Activated T-helper 2 cell treated with anti-CD3 and anti-CD28 coated beads, Interferon-gamma antibody, Interleukin-2, Interleukin-4, amounts not matched to agents 10 μg/mL and 5 μg/mL and 100 μg/mL, durations not matched to agents 14 hours and 24 hours and 36 hours (primary cell): ENCODE measurements at regions of chr2 and their contacts with region 1.

Region 1: DNA sequence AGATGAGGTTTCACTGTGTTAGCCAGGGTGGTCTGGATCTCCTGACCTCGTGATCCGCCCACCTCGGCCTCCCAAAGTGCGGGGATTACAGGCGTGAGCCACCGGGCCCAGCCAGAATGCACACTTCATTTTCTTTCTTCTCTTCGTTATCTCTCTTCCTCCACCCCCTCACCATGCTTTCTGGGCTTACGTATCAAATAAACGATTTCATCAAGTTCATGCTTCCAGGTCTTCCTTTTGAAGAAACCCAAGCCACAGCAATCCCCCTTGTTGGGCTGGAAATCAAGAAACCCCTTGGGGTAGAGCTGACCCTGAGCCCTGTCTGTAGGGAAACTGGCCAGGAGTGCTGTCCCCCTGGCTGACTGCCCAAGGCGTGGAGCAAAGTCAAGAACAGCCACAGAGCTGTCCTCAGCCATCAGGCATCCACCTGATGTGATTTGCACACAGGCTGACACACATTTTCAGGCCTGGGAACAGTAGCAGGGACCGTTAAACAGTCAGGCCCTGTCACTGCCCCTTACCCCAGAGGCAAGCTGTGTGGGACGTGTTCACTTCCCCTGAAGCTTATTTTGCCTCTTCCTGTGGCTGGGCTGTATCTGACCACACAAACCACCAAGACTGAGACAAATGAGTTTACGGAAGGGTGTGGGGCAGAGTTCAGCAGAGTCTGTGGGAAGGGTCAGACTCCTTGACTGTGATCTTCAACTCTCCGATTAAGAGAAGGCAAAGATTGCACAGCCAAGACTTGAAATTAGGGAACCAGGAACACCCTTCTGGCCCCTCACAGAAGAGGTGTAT is 15.1 kb upstream of the NMUR1 start:
- DNase-seq: peak; percentile 78
- H3K4me3 Mint-ChIP-seq: peak overlapping the region; percentile 78
- H3K27ac Mint-ChIP-seq: peak overlapping the region; percentile 99
- H3K4me1 Mint-ChIP-seq: peaks cover 40% of the 10 kb centered on the region
- H3K27me3 Mint-ChIP-seq: peaks cover 8% of the 10 kb centered on the region

Region 2: DNA sequence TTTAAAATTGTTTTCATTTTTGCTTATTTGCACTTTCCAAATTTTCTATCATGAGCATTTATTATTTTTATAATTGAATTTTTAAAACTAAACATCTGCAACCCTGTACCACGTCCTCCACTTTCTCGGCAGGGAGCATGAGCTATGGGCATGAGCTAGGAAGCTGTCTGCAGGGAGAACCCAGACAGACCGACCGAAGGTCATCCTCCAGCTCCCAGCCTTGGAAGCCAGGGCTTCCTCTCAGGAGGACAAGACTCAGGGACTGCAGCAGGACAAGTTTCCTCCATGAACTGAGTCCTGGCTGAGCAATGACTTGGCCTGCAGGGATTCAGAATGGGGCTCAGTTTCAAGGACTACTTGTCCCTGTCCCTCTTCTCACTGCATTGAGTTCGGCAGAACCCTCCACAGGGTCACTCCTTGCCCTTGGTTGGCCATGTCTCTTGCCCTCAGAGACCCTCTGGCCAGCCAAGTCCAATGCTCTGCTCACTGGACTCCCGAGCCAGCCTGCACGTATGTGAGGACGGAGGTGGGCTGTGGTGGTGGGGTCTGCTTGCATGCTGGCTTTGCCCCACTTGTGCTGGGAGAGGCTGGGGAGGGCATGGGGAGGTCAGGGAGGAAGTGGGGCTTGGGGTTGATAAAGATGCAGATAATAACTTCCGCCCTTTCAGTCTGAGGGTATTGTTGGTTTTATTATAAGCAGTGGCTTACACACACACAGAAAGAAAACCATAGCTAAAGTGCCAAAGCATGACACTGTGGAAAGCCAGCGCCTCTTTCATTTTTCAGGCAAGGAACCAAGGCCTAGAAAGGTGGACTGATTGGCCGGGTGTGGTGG is 21.6 kb before region 1 on chr2:
- intact Hi-C with region 1: loop called (anchors 1 kb)
- DNase-seq: no peak
- H3K4me3 Mint-ChIP-seq: peak overlapping the region; percentile 18
- H3K27ac Mint-ChIP-seq: peak overlapping the region; percentile 28
- H3K4me1 Mint-ChIP-seq: peaks cover 54% of the 10 kb centered on the region
- H3K27me3 Mint-ChIP-seq: peaks cover 6% of the 10 kb centered on the region

Region 3: DNA sequence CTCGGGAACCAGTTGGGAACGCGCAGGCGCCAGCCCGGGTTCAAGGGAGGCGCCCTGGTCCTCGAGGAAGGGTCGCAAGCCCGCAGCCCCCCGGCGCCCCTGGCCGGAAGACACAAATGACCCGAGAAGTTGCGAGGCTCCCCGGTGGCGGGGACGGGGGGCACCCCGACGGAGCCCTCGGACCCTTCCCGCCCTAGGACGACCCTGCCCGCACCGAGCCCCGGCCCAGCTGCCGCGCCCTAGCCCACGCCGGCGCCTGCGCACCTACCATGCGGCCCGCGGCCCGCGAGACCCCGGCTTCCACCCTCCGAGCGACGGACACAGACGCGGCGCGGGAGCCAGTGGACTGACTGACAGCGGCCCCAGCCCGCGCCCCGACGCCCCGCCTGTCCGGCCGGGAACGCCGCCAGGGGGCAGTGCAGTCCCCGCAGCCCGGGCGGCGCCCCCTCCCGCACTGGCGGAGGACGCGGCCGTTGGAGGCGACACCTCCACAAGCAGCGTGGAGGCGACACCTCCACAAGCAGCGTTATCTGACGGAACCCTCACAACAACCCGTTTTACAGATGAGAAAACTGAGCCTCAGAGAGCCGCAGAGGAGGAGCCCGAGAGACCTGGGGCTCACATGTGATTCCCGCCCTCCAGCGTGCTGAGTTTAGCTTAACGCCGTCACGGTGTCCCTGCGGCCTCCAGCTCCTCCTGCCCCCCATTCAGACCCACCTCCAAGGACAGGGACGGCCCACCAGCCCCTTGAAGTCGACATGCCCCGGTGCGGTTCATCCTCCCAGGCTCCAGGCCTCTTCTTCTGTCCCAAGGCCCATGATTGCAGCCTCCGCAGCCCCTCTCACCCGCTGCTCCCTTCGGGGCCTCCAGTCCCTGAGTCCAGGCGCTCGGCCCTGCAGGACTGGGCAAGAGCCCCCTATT is 15.0 kb before region 1 on chr2 and contains the start of gene NMUR1:
- intact Hi-C with region 1: loop called (anchors 2 kb)
- DNase-seq: peak; percentile 71
- H3K4me3 Mint-ChIP-seq: peak within 1 kb of the TSS; percentile 66
- H3K27ac Mint-ChIP-seq: no peak within 1 kb of the TSS
- H3K4me1 Mint-ChIP-seq: peaks cover 33% of the 10 kb centered on the region
- H3K27me3 Mint-ChIP-seq: peaks cover 9% of the 10 kb centered on the region
- total RNA-seq, gene NMUR1: 0.16 and 0.28 TPM in 2 replicates

Region 4: DNA sequence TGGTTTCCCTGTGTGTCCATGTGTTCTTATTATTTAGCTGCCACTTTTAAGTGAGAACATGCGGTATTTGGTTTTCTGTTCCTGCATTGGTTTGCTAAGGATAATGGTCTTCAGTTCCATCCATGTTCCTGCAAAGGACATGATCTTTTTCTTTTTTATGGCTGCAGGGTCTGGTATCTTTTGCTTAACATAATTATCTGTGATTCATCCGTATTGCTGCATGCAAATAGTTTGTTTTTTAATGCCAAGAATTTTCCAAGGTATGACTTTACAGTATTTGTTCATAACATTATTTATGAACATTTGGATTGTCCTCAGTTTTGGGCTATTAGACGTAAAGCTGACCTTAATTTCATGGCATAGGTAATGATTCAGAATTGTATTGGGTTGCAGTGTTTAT is 1169.7 kb after region 1 on chr2:
- intact Hi-C with region 1: no loop called
- DNase-seq: no peak
- H3K4me3 Mint-ChIP-seq: no peak overlapping the region
- H3K27ac Mint-ChIP-seq: no peak overlapping the region
- H3K4me1 Mint-ChIP-seq: peaks cover 12% of the 10 kb centered on the region
- H3K27me3 Mint-ChIP-seq: no peaks in the 10 kb centered on the region